Sigmoid colon (tissue), 7 donors: ENCODE measurements at regions of chr21 and their contacts with region 1.

Region 1: GRCh38 chr21:42009831-42010523 is at the start of gene ZBTB21:
- DNase-seq: peak; percentile 99
- H3K4me3 ChIP-seq: peak within 1 kb of the TSS; percentile 70 to 90 (median 81)
- H3K27ac ChIP-seq: peak within 1 kb of the TSS; percentile 95 to 99 (median 97)
- H3K4me1 ChIP-seq: peaks cover 0 to 16% (median 8%) of the 10 kb centered on the region in 4 donors
- H3K27me3 ChIP-seq: no peaks in the 10 kb centered on the region
- CTCF ChIP-seq: no peak
- EP300 ChIP-seq: peak in 1 of 4 donors; percentile 47
- POLR2A ChIP-seq: peak; percentile 83 to 86
- total RNA-seq, gene ZBTB21: 6.9 to 14.7 (median 7.7) TPM

Region 2: GRCh38 chr21:41933313-41934086 is 76.5 kb before region 1 on chr21:
- intact Hi-C with region 1: loop called (anchors 5 kb)
- DNase-seq: peak; percentile 78
- H3K4me3 ChIP-seq: peak overlapping the region; percentile 3 to 44 (median 42)
- H3K27ac ChIP-seq: peak overlapping the region; percentile 53 to 90 (median 86)
- H3K4me1 ChIP-seq: peaks cover 0 to 32% (median 30%) of the 10 kb centered on the region in 4 donors
- H3K27me3 ChIP-seq: no peaks in the 10 kb centered on the region
- CTCF ChIP-seq: peak in 1 of 4 experiments; percentile 37
- EP300 ChIP-seq: no peak
- POLR2A ChIP-seq: no peak

Region 3: DNA sequence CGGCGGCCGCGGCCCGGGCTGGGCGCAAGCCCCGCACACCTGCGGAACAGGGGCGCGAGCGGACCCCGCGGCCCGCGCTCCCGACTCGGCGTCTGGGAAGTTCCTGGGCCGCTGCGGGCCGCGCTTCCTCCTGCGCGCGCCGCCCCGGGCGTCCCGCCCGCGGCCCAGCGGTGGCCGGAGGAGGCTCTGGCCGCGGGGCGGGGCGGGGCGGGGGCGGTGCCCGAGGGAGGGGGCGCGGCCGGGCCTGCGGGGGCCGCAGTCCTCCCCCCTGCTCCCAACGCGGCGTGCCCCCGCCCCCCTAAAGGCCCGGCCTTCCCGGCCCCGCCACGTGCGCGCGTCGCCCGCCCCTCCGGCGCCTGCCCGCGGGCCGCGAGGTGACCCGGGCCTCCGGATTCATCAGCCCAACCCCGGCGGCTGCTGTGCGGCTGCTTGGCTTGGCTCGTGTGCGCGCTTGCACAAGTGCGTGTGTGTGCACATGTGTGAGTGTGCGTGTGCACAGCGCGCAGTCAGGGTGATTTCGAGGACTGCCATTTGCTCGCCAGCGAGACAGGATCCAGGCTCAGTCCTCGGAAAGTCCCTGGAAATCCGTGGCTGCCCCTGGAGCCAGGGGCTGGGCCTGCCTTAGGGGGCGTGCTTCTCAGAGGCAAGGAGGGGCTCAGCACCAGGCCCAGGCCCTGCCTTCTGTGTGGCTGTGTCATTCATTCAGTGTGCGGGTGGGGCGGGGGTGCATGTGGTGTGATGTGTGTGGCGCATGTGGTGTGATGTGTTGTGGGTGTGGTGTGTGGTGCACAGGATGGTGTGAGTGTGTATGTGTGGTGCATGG is 55.9 kb before region 1 on chr21 and contains the start of gene C2CD2:
- intact Hi-C with region 1: loop called (anchors 1 kb)
- DNase-seq: peak; percentile 83
- H3K4me3 ChIP-seq: peak within 1 kb of the TSS; percentile 54 to 96 (median 84)
- H3K27ac ChIP-seq: peak within 1 kb of the TSS; percentile 59 to 87 (median 76)
- H3K4me1 ChIP-seq: peaks cover 0 to 59% (median 42%) of the 10 kb centered on the region in 4 donors
- H3K27me3 ChIP-seq: no peaks in the 10 kb centered on the region
- CTCF ChIP-seq: no peak
- EP300 ChIP-seq: no peak
- POLR2A ChIP-seq: no peak
- total RNA-seq, gene C2CD2: 19.0 to 45.1 (median 22.2) TPM

Region 4: GRCh38 chr21:42047821-42048613 is 38.0 kb after region 1 on chr21:
- intact Hi-C with region 1: no loop called
- DNase-seq: no peak
- H3K4me3 ChIP-seq: no peak overlapping the region
- H3K27ac ChIP-seq: peak overlapping the region in 3 of 4 donors; percentile 27 to 57 (median 45)
- H3K4me1 ChIP-seq: peaks cover 0 to 16% (median 5%) of the 10 kb centered on the region in 4 donors
- H3K27me3 ChIP-seq: no peaks in the 10 kb centered on the region
- CTCF ChIP-seq: no peak
- EP300 ChIP-seq: no peak
- POLR2A ChIP-seq: no peak

Region 5: DNA sequence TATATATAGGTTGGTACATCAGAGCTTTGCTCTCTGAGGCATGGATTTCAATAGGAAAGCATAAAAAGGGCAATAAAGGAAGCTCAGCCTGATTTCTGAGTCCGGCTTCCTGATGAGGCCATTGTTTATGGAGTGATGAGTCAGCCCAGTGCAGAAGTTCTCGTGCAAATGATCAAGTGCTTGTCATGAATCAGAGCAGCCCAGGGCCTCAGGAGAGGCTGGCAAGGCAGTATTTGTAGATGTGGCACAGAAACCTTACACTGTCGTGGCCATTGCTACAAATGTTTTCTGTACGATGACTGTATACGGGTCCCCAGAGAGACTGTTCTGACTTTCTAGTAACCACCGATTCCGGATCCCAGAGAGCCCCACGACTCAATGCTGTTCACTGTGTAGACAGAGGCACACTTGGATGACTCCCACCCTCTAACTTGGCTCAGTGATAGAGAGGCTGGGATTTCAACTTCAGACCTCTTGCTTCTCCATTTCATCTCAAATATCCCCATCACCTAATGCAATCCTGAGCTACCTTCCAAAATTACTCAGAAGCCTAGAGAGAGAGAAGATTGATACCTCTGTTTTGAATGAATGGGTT is 88.0 kb after region 1 on chr21:
- intact Hi-C with region 1: loop called (anchors 5 kb)
- DNase-seq: no peak
- H3K4me3 ChIP-seq: no peak overlapping the region
- H3K27ac ChIP-seq: peak overlapping the region in 3 of 4 donors; percentile 56 to 70 (median 64)
- H3K4me1 ChIP-seq: peaks cover 0 to 12% (median 10%) of the 10 kb centered on the region in 4 donors
- H3K27me3 ChIP-seq: no peaks in the 10 kb centered on the region
- CTCF ChIP-seq: no peak
- EP300 ChIP-seq: peak in 1 of 4 donors; percentile 40
- POLR2A ChIP-seq: no peak

Region 6: DNA sequence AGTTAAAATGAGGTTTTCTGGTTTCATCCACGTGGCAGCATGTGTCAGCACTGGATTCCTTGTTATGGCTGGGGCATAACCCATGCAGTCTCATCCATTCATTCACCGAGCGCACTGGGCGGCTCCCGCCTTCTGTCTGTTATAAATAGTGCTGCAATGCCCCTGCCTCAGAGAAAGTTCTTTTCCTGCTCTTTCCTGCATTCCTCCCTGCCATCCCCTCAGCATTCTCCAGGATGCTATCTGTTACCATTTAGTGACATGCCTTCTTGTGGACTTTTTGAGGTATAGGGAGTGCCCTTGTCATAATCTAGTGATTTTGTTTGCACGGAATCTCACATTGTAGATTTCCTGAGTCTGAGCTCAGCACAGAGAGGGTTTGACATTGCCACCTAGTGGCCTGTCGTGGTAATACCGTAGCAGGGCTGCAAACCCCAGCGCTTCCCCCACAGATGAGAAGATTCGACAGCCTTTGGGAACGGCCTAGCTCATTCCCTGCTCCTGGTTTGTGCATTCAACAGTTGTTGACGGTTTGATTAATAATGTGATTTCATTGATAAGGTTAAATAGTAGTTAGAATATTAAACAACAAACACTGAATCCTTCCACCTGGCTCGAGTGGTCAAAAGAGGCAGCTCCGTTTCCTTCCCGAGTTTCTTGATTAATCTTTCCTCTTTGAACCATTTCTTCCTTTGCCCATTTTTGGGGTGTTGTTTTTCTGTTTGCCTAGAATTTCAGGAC is 107.4 kb after region 1 on chr21:
- intact Hi-C with region 1: loop called (anchors 5 kb)
- DNase-seq: peak; percentile 85
- H3K4me3 ChIP-seq: peak overlapping the region in 1 of 4 donors; percentile 18
- H3K27ac ChIP-seq: no peak overlapping the region
- H3K4me1 ChIP-seq: peaks cover 0 to 8% (median 4%) of the 10 kb centered on the region in 4 donors
- H3K27me3 ChIP-seq: peaks cover 0 to 45% (median 10%) of the 10 kb centered on the region in 3 donors
- CTCF ChIP-seq: peak; percentile 86 to 96 (median 94)
- EP300 ChIP-seq: no peak
- POLR2A ChIP-seq: no peak

Region 7: GRCh38 chr21:42227909-42228708 is 218.1 kb after region 1 on chr21:
- intact Hi-C with region 1: loop called (anchors 10 kb)
- DNase-seq: peak; percentile 97
- H3K4me3 ChIP-seq: no peak overlapping the region
- H3K27ac ChIP-seq: peak overlapping the region; percentile 35 to 67 (median 58)
- H3K4me1 ChIP-seq: peaks cover 0 to 59% (median 44%) of the 10 kb centered on the region in 4 donors
- H3K27me3 ChIP-seq: no peaks in the 10 kb centered on the region
- CTCF ChIP-seq: no peak
- EP300 ChIP-seq: peak in 1 of 4 donors; percentile 33
- POLR2A ChIP-seq: no peak